Activated naive CD4-positive, alpha-beta T cell treated with anti-CD3 and anti-CD28 coated beads for 36 hours (primary cell): ENCODE measurements at regions of chr12 and their contacts with region 1.

Region 1: GRCh38 chr12:121678716-121679580 is 9.5 kb upstream of the MORN3 start:
- DNase-seq: no peak
- H3K4me3 Mint-ChIP-seq: no peak overlapping the region
- H3K27ac Mint-ChIP-seq: no peak overlapping the region
- H3K4me1 Mint-ChIP-seq: peaks cover 8% of the 10 kb centered on the region
- H3K27me3 Mint-ChIP-seq: no peaks in the 10 kb centered on the region

Region 2: GRCh38 chr12:120797677-120798642 is 881.0 kb before region 1 on chr12:
- CTCF ChIA-PET with region 1: no interaction called
- intact Hi-C with region 1: no loop called
- DNase-seq: peak; percentile 28
- H3K4me3 Mint-ChIP-seq: no peak overlapping the region
- H3K27ac Mint-ChIP-seq: peak overlapping the region; percentile 89
- H3K4me1 Mint-ChIP-seq: peaks cover 47% of the 10 kb centered on the region
- H3K27me3 Mint-ChIP-seq: no peaks in the 10 kb centered on the region

Region 3: DNA sequence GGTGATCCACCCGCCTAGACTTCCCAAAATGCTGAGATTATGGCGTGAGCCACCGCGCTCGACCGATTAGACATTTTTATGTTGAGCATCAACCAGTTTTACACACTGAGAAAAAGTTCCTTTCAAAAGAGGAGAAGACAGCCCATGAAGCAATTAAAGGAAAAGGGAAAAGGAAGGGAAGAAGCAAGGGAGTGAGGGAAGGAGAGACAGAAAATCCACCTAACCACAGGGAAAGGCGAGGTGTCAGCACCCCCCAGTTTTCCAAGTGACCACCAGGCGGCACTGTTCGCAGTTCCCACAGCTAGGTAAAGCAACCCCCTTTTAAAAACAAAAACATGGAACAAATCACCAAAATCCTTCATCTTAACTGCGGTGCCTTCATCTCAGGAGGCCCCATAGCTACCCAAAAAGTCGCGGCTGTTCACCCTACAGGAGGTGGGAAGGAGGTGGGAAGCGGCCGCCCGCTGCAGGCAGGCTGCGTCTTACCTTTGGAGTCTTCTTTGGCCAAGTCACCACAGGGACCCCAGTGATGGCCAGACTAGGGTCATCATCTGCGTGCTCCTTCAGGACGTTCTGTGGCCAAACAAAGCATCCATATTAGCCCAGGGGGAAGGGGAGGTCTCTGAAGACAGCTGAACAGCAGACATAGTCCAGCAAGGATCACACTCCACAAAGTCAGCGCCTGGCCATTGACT is 184.7 kb before region 1 on chr12:
- CTCF ChIA-PET with region 1: interaction called, 18 read pairs
- intact Hi-C with region 1: no loop called
- DNase-seq: peak; percentile 73
- H3K4me3 Mint-ChIP-seq: no peak overlapping the region
- H3K27ac Mint-ChIP-seq: no peak overlapping the region
- H3K4me1 Mint-ChIP-seq: peaks cover 6% of the 10 kb centered on the region
- H3K27me3 Mint-ChIP-seq: no peaks in the 10 kb centered on the region

Region 4: DNA sequence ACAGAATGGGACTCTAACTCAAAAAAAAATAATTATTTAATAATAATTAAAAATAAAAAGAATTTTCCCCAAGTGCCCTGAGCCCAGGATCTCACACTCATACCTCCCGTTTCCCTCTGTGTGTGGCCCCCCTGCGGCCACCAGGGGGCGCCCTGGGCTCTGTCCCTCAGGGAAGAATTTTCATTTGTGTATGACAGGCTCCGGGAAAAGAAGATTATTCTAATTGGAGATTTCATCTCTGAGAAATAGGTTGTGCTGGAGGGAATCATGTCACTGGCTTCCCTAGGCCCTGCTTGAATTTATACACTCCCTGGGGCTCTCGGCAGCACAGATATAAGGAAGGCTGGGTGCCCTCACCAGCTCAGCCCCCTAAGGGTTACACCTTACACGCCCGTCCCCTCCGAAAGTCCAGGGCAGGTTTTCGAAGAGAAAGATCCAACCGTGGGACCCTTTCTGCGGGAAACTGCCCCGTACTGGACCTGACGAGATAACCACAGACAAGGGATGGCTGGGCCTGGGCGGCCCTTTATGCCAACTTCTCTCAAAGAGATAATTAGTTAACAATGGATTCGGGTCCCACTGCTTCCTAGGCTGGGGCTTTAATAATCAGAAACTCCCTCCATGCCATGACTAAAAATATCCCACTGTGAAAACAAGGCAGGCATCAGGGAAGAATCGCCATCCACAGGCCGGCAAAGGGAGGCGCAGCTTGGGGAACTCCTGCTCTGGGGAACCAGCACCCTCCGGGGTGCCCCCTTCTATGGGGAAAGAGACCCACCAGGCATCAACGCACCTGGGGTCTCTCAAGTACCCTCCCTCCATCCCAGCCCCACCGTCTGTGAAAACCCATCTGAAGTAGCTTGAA is 178.8 kb before region 1 on chr12:
- CTCF ChIA-PET with region 1: interaction called, 18 read pairs
- intact Hi-C with region 1: loop called (anchors 1 kb)
- DNase-seq: peak; percentile 83
- H3K4me3 Mint-ChIP-seq: no peak overlapping the region
- H3K27ac Mint-ChIP-seq: no peak overlapping the region
- H3K4me1 Mint-ChIP-seq: peaks cover 9% of the 10 kb centered on the region
- H3K27me3 Mint-ChIP-seq: no peaks in the 10 kb centered on the region

Region 5: GRCh38 chr12:121550974-121551634 is 127.8 kb before region 1 on chr12:
- CTCF ChIA-PET with region 1: interaction called, 30 read pairs
- intact Hi-C with region 1: loop called (anchors 1 kb)
- DNase-seq: no peak
- H3K4me3 Mint-ChIP-seq: no peak overlapping the region
- H3K27ac Mint-ChIP-seq: no peak overlapping the region
- H3K4me1 Mint-ChIP-seq: peaks cover 4% of the 10 kb centered on the region
- H3K27me3 Mint-ChIP-seq: no peaks in the 10 kb centered on the region

Region 6: DNA sequence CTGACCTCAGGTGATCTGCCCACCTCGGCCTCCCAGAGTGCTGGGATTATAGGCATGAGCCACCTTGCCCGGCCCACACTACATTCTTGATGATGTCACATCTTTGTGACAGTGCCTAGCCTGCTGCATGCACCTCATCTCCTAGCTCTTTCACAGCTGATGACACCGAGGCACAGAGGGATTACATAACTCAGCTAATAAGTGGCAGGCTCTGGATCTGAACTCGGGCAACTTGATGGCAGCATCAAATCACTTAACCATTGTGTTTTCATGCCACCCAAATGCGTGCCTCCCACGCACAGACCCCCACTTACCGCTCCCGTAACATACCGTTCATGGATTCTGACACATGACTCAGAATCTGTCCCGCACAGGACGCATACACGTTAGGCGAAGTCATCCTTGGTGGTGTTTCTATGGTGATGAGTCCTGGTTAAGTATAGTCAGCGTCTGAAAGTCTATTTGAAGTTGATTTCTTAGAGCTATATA is 41.0 kb after region 1 on chr12:
- CTCF ChIA-PET with region 1: no interaction called
- intact Hi-C with region 1: no loop called
- DNase-seq: no peak
- H3K4me3 Mint-ChIP-seq: no peak overlapping the region
- H3K27ac Mint-ChIP-seq: no peak overlapping the region
- H3K4me1 Mint-ChIP-seq: peaks cover 2% of the 10 kb centered on the region
- H3K27me3 Mint-ChIP-seq: no peaks in the 10 kb centered on the region